ENCODE measurements at regions of chr12 and their contacts with region 1.

Region 1: DNA sequence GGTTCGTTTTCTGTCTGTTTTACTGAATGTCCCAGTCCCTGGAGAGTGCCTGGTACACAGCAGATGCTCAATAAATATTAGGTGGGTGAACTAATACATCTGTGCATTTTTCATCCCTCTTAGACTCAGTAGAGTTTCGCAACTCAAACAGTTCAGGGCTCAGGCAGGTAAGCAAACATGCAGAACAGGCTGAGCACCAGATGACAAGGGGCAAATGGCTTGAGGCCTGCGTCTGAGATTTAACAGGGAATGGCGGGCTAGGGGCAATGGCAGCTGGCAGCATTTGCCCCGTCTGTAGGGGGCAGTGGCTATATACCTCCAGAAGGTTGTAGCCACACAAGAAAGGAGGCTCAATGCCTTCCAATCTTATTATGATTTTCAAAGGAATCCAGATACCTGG is 8.6 kb upstream of the RAN start:
- DNase-seq: peak; percentile 74
- ATAC-seq: peak; percentile 88
- H3K4me3 ChIP-seq: no peak overlapping the region
- H3K27ac ChIP-seq: no peak overlapping the region
- H3K4me1 ChIP-seq: peaks cover 36% of the 10 kb centered on the region
- H3K27me3 ChIP-seq: peaks cover 0 to 2% of the 10 kb centered on the region in 2 experiments; a peak in 2 of 5 replicates
- CTCF ChIP-seq: peak; percentile 53
- EP300 ChIP-seq: no peak; a peak in 1 of 4 replicates
- POLR2A ChIP-seq: no peak
- RAD21 ChIP-seq: no peak

Region 2: DNA sequence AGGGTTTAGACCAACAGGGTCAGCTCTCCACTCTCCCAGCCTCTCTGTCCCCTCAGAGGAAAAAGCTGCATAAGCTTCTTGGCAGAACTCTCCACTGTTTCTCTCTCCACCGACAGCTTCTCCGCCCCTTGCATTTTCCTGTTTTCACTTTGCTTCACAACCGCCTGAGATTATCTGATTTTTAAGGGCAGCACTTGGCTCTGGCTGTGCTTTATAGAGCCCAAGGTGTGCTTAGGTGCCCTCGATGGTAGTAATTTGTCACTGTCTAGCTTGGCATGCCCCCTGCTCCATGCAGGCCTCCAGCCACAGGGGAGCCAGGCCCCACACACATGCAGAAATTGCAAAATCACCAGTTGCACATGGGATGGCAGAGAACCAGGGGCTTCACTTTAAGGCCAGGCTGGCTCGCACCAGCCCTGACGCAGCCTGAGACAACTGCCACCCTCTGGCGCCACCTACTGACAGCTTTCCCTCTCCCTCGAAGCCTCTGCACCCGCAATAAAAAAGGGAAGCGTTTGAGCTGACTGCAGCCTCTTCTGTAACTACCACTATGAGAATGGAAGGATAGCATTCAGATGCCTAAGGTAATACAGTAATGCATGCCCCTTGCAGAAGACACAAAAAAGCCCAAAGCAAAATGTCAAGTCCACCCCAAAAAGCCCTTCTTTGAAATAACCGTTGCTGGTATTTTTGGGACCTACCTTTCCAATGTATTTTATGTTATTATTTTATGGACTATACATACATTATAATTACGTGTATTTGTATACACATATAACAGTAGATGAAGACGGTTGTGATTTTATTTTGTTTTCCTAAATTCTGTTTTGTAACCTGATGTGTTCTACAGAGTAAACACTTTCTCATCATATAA is 115.2 kb before region 1 on chr12:
- CTCF ChIA-PET with region 1: no interaction called
- POLR2A ChIA-PET with region 1: no interaction called
- in situ Hi-C with region 1: no loop called
- intact Hi-C with region 1: no loop called
- DNase-seq: peak; percentile 40
- ATAC-seq: peak; percentile 97
- H3K4me3 ChIP-seq: no peak overlapping the region
- H3K27ac ChIP-seq: no peak overlapping the region
- H3K4me1 ChIP-seq: no peaks in the 10 kb centered on the region
- H3K27me3 ChIP-seq: peaks cover 0 to 8% of the 10 kb centered on the region in 2 experiments; a peak in 1 of 5 replicates
- CTCF ChIP-seq: peak; percentile 93
- EP300 ChIP-seq: no peak
- POLR2A ChIP-seq: no peak
- RAD21 ChIP-seq: peak; percentile 86

Region 3: DNA sequence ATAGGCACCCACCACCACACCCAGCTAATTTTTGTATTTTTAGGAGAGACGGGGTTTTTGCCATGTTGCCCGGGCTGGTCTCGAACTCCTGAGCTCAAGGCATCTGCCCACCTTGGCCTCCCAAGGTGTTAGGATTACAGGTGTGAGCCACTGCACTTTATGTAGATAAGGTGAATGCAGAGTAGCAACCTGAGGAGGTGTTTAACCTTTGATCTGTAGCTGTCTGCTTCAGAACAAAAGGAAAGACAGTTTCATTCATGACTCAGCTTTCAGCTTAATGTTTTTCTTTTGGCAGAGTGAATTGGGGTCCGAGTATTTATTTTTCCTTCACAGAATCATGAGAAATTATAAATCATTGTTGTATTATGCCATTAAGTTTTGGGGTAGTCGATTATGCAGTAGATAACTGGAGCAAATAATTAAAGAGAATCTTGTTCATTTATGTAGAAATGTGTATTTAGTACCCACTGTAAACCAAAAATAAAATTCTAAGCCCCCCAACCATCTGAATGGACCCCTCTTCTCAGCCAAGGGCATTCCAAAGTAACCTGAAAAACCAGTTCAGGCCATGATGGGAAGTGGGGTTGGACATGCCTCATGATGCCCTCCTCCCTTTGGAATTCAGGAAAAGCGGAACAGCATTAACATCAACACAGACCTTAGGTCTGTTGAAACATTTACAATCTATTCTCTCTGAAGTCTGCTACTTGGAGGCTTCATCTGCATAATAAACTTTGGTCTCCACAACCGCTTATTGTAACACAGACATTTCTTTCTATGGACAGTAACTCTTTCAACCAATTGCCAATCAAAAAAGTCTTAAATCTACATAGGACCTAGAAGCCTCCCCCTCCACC is 13.5 kb before region 1 on chr12:
- CTCF ChIA-PET with region 1: no interaction called
- POLR2A ChIA-PET with region 1: no interaction called
- in situ Hi-C with region 1: no loop called
- intact Hi-C with region 1: loop called (anchors 1 kb)
- DNase-seq: peak; percentile 89
- ATAC-seq: peak; percentile 80
- H3K4me3 ChIP-seq: peak overlapping the region in 1 of 3 experiments; percentile 7; a peak in 1 of 6 replicates
- H3K27ac ChIP-seq: peak overlapping the region; percentile 61
- H3K4me1 ChIP-seq: peaks cover 74% of the 10 kb centered on the region
- H3K27me3 ChIP-seq: no peaks in the 10 kb centered on the region
- CTCF ChIP-seq: no peak
- EP300 ChIP-seq: peak in 1 of 2 experiments; percentile 31; a peak in 2 of 4 replicates
- POLR2A ChIP-seq: no peak
- RAD21 ChIP-seq: no peak

Measured in HepG2 (cell line).